ENCODE measurements at regions of chr11 and their contacts with region 1.

Region 1: GRCh38 chr11:93271596-93271995 is 58.9 kb upstream of the DEUP1 start:
- DNase-seq: no peak
- ATAC-seq: no peak
- H3K4me3 ChIP-seq: no peak overlapping the region
- H3K27ac ChIP-seq: no peak overlapping the region
- H3K4me1 ChIP-seq: no peaks in the 10 kb centered on the region
- H3K27me3 ChIP-seq: no peaks in the 10 kb centered on the region
- CTCF ChIP-seq: no peak

Region 2: GRCh38 chr11:93288079-93288478 is 16.5 kb after region 1 on chr11:
- CTCF ChIA-PET with region 1: no interaction called
- POLR2A ChIA-PET with region 1: no interaction called
- in situ Hi-C with region 1: no loop called
- intact Hi-C with region 1: no loop called
- DNase-seq: no peak
- ATAC-seq: no peak
- H3K4me3 ChIP-seq: no peak overlapping the region
- H3K27ac ChIP-seq: no peak overlapping the region
- H3K4me1 ChIP-seq: no peaks in the 10 kb centered on the region
- H3K27me3 ChIP-seq: no peaks in the 10 kb centered on the region
- CTCF ChIP-seq: no peak

Region 3: GRCh38 chr11:95014184-95014821 is 1742.7 kb after region 1 on chr11:
- CTCF ChIA-PET with region 1: no interaction called
- POLR2A ChIA-PET with region 1: interaction called, 11 read pairs
- in situ Hi-C with region 1: no loop called
- intact Hi-C with region 1: no loop called
- DNase-seq: no peak
- ATAC-seq: peak; percentile 45; the same call in 1 of the 2 replicates
- H3K4me3 ChIP-seq: no peak overlapping the region
- H3K27ac ChIP-seq: no peak overlapping the region
- H3K4me1 ChIP-seq: no peaks in the 10 kb centered on the region
- H3K27me3 ChIP-seq: peaks cover 8% of the 10 kb centered on the region; the same call in 1 of the 2 replicates
- CTCF ChIP-seq: no peak